ENCODE measurements at regions of chr6 and their contacts with region 1.

Region 1: GRCh38 chr6:150417899-150418826 is 49.4 kb downstream of the IYD start:
- DNase-seq: no peak
- ATAC-seq: peak; percentile 90
- H3K4me3 Mint-ChIP-seq: peak overlapping the region; percentile 82
- H3K27ac Mint-ChIP-seq: peak overlapping the region; percentile 77
- H3K4me1 Mint-ChIP-seq: peaks cover 14% of the 10 kb centered on the region
- H3K27me3 Mint-ChIP-seq: peaks cover 16% of the 10 kb centered on the region
- CTCF ChIP-seq: peak; percentile 58

Region 2: DNA sequence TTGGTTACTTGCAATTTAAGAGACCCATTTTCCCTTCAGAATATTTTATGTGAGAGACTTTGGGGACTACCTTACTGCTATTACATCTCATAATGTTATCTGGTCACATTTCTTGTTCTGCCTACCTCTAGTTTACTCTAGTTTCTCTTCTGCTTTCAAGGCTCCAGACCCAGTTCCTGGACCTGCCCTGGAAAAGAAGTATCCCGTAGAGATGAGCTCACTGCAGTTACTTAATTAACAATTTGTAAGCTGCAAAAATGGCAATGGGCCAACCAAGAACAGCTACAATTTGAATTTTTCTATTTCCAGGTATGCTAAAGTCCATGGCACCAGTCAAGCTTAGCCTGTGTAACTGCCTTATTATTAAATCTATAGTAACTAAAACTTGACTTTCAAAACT is 1075.6 kb before region 1 on chr6:
- CTCF ChIA-PET with region 1: no interaction called
- POLR2A ChIA-PET with region 1: no interaction called
- intact Hi-C with region 1: no loop called
- DNase-seq: no peak
- ATAC-seq: peak; percentile 65
- H3K4me3 Mint-ChIP-seq: peak overlapping the region; percentile 38
- H3K27ac Mint-ChIP-seq: peak overlapping the region; percentile 71
- H3K4me1 Mint-ChIP-seq: peaks cover 62% of the 10 kb centered on the region
- H3K27me3 Mint-ChIP-seq: no peaks in the 10 kb centered on the region
- CTCF ChIP-seq: no peak

Region 3: DNA sequence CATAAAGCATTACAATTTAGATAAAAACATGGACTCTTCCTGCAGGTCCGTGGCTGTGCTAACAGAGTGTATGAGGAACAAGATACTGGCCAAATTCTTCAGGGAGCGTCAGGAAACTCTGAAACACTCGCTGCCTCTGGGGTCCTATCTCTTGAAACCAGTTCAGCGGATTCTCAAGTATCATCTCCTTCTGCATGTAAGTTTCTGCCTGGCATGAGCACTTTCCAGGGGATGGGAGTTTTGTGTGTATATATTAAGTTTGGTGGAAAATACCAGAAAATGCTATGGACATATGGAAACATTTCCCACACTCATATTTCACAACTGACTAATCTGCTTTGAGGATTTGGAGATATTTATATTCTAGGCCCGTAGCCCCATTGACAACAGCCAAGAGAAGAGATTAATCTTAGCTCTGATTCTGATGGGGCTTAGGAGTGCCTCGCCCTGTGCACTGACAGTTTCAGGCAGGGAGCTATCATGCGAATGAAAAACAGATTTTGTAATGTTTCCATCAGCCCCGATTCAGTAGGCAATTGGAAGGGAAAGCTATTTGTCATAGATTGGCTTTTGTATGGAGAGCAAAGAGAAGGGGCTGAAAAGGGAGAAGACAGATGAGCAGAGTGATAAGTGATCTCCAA is 382.6 kb after region 1 on chr6:
- CTCF ChIA-PET with region 1: interaction called, 12 read pairs
- POLR2A ChIA-PET with region 1: no interaction called
- intact Hi-C with region 1: no loop called
- DNase-seq: no peak
- ATAC-seq: no peak
- H3K4me3 Mint-ChIP-seq: no peak overlapping the region
- H3K27ac Mint-ChIP-seq: no peak overlapping the region
- H3K4me1 Mint-ChIP-seq: no peaks in the 10 kb centered on the region
- H3K27me3 Mint-ChIP-seq: no peaks in the 10 kb centered on the region
- CTCF ChIP-seq: no peak

Region 4: GRCh38 chr6:150865406-150866146 is 447.4 kb after region 1 on chr6 and contains the start of gene MTHFD1L:
- CTCF ChIA-PET with region 1: interaction called, 3 read pairs
- POLR2A ChIA-PET with region 1: no interaction called
- intact Hi-C with region 1: loop called (anchors 2 kb)
- DNase-seq: peak; percentile 78
- ATAC-seq: peak; percentile 77
- H3K4me3 Mint-ChIP-seq: peak within 1 kb of the TSS; percentile 90
- H3K27ac Mint-ChIP-seq: peak within 1 kb of the TSS; percentile 79
- H3K4me1 Mint-ChIP-seq: peaks cover 23% of the 10 kb centered on the region
- H3K27me3 Mint-ChIP-seq: peaks cover 2% of the 10 kb centered on the region
- CTCF ChIP-seq: no peak
- total RNA-seq, gene MTHFD1L: 56.4 and 60.4 TPM in 2 replicates

Region 5: DNA sequence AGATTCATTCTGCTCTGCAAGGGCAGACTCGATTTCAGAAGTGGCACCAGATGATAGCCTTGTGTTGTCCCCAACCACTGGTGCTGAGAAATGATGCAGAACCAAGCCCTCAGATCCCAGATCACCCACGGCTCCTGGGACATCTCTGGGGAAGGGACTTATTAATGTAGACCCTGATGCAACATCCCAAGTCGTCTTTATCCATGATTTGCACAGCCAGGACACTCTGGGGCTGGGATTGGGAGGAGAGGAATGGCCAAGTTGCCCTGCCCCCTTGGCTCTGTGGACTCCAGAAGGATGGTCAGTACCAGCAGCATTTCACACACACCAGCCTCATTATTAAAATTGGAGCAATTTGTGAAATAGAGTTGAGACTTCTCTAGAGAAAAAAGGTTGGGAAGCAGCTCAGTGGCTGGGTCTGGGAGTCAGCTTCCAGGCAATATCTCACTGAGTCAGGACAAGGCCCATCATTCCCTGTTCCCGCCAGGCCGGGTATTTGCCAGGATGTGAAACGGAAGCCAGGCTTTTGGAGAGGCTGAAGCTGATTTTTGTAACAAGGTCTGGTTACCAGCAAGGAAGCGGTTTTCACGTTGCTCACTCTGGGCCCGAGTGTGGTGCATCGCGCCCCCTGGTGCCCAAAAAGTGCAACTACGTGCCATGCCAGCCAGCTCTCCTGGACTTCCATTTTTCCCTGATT is 905.8 kb after region 1 on chr6:
- CTCF ChIA-PET with region 1: interaction called, 15 read pairs
- POLR2A ChIA-PET with region 1: interaction called, 3 read pairs
- intact Hi-C with region 1: loop called (anchors 1 kb)
- DNase-seq: peak; percentile 61
- ATAC-seq: peak; percentile 84
- H3K4me3 Mint-ChIP-seq: peak overlapping the region; percentile 53
- H3K27ac Mint-ChIP-seq: no peak overlapping the region
- H3K4me1 Mint-ChIP-seq: peaks cover 23% of the 10 kb centered on the region
- H3K27me3 Mint-ChIP-seq: peaks cover 30% of the 10 kb centered on the region
- CTCF ChIP-seq: no peak

Measured in activated B cell treated with CpG ODN at 0.5 μM for 24 hours (primary cell).